ENCODE measurements at regions of chr3 and their contacts with region 1.

Region 1: GRCh38 chr3:44624749-44625480 is at the start of gene ZNF197:
- DNase-seq: peak; percentile 57
- ATAC-seq: peak; percentile 96
- H3K4me3 ChIP-seq: peak within 1 kb of the TSS; percentile 58 to 75 (median 68); a peak in 5 of 6 replicates
- H3K27ac ChIP-seq: peak within 1 kb of the TSS; percentile 61
- H3K4me1 ChIP-seq: peaks cover 6% of the 10 kb centered on the region
- H3K27me3 ChIP-seq: no peaks in the 10 kb centered on the region
- CTCF ChIP-seq: peak; percentile 29; the same call in 1 of the 2 replicates
- EP300 ChIP-seq: no peak
- POLR2A ChIP-seq: peak in 1 of 2 experiments; percentile 60; a peak in 1 of 4 replicates
- RAD21 ChIP-seq: no peak
- total RNA-seq, gene ZNF197: 6.8 and 9.9 TPM in 2 replicates

Region 2: GRCh38 chr3:44045476-44046275 is 579.2 kb before region 1 on chr3:
- CTCF ChIA-PET with region 1: no interaction called
- POLR2A ChIA-PET with region 1: no interaction called
- in situ Hi-C with region 1: no loop called
- intact Hi-C with region 1: loop called (anchors 5 kb)
- DNase-seq: no peak
- ATAC-seq: no peak
- H3K4me3 ChIP-seq: no peak overlapping the region
- H3K27ac ChIP-seq: no peak overlapping the region
- H3K4me1 ChIP-seq: no peaks in the 10 kb centered on the region
- H3K27me3 ChIP-seq: peaks cover 2 to 22% of the 10 kb centered on the region in 2 experiments; a peak in 3 of 5 replicates
- CTCF ChIP-seq: no peak
- EP300 ChIP-seq: no peak
- POLR2A ChIP-seq: no peak
- RAD21 ChIP-seq: no peak

Region 3: GRCh38 chr3:44584646-44585501 is 40.0 kb before region 1 on chr3 and contains the start of gene ZNF660:
- CTCF ChIA-PET with region 1: no interaction called
- POLR2A ChIA-PET with region 1: no interaction called
- in situ Hi-C with region 1: no loop called
- intact Hi-C with region 1: no loop called
- DNase-seq: peak; percentile 57
- ATAC-seq: peak; percentile 96
- H3K4me3 ChIP-seq: peak within 1 kb of the TSS; percentile 51 to 80 (median 77); a peak in 5 of 6 replicates
- H3K27ac ChIP-seq: peak within 1 kb of the TSS; percentile 65
- H3K4me1 ChIP-seq: peaks cover 14% of the 10 kb centered on the region
- H3K27me3 ChIP-seq: no peaks in the 10 kb centered on the region
- CTCF ChIP-seq: no peak
- EP300 ChIP-seq: no peak
- POLR2A ChIP-seq: peak; percentile 59 to 69
- RAD21 ChIP-seq: no peak
- total RNA-seq, gene ZNF660: 3.3 and 6.1 TPM in 2 replicates

Measured in HepG2 (cell line).